ENCODE measurements at regions of chr2 and their contacts with region 1.

Region 1: DNA sequence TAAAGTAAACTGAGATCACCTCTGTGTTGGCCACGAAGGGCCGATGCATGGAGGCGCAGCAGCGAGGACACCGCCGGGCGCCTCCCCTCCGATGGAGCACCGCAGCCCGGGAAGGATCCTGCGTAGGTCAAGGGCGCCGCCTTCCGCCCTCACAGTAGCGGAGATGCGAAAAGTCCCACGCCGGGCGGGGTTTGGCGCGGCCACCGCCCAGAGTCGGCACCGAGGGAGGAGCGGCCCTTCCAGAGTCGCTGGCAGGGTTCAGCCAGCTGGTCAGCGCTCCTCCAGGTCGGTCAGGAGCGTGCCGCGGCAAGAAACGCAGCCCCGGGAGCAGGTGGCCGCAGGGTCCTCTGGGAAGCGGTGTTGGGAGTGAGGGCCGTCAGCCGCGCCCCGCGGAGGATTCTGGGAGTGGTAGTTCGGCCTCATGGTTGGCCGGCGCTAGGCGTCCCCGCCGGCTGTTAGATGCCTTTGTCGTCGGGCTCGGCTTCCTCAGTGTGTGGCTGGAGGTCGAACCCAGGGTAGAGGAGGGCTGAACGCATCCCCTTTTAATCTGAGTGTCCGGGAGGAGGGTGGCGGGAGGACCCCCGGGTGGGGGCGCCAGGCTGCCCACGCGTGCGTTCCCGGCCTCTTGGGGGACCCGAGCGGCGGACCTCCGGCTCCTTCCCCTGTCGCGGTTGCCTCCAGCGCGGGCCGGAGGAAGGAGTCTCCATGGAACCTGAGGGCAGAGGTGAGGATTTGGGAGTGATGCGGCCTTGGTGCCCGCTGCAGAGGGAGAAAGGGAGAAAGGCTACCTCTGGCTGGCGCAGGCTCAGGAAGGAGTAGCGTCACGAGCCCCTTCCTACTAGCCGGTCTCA is at the start of gene ZNF892:
- DNase-seq: peak; percentile 97
- H3K4me3 ChIP-seq: peak within 1 kb of the TSS; percentile 76 to 94 (median 80)
- H3K27ac ChIP-seq: peak within 1 kb of the TSS; percentile 85 to 95 (median 92)
- H3K4me1 ChIP-seq: peaks cover 19 to 26% (median 22%) of the 10 kb centered on the region in 4 donors
- H3K27me3 ChIP-seq: no peaks in the 10 kb centered on the region
- CTCF ChIP-seq: peak; percentile 47 to 58 (median 49)
- EP300 ChIP-seq: no peak
- POLR2A ChIP-seq: no peak
- total RNA-seq, gene ZNF892: 3.5 to 12.0 (median 7.6) TPM

Region 2: DNA sequence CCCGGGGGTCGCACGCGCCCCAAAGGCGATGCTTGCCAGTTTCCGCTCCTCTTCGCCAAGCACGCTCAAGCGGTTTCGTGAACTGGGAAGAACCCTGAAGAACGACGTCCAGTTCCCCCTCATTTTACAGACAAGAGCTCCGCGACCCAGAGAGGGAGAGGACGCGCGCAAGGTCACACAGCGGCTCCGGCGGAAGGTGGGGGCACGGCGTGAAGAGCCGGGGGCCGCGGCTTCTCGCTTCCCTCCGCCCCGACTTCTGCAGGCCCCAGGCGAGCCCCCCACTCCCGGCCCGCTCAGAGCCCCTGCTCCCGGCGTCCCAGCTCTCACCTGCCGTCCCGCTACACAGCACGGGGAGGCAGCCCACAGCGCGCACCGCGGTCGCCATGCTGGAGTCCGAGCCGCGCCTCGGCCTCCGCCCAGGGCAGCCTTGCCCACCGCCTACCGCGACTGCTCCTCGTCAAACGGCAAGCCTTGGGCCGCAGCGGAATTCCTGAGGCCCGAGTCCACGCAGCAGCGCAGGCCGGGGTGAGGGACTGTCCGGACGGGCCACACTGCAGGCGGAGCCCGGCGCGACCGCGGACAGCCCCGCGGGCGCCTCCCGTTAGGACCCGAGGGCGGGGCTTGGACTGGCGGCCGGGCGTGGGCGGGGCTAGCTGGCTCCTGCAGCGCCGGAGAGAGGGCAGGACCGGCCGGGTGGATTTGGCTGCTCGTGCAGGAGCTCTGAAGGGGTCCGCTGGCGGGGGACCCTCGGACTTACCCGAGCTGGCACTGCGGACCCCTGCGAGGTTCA is 85.7 kb before region 1 on chr2 and contains the start of gene MRPS5:
- intact Hi-C with region 1: loop called (anchors 5 kb)
- DNase-seq: peak; percentile 93
- H3K4me3 ChIP-seq: peak within 1 kb of the TSS; percentile 78 to 97 (median 93)
- H3K27ac ChIP-seq: peak within 1 kb of the TSS; percentile 89 to 96 (median 92)
- H3K4me1 ChIP-seq: peaks cover 19 to 41% (median 39%) of the 10 kb centered on the region in 4 donors
- H3K27me3 ChIP-seq: no peaks in the 10 kb centered on the region
- CTCF ChIP-seq: peak in 1 of 3 experiments; percentile 29
- EP300 ChIP-seq: no peak
- POLR2A ChIP-seq: peak; percentile 3
- total RNA-seq, gene MRPS5: 31.1 to 46.6 (median 39.8) TPM

Region 3: DNA sequence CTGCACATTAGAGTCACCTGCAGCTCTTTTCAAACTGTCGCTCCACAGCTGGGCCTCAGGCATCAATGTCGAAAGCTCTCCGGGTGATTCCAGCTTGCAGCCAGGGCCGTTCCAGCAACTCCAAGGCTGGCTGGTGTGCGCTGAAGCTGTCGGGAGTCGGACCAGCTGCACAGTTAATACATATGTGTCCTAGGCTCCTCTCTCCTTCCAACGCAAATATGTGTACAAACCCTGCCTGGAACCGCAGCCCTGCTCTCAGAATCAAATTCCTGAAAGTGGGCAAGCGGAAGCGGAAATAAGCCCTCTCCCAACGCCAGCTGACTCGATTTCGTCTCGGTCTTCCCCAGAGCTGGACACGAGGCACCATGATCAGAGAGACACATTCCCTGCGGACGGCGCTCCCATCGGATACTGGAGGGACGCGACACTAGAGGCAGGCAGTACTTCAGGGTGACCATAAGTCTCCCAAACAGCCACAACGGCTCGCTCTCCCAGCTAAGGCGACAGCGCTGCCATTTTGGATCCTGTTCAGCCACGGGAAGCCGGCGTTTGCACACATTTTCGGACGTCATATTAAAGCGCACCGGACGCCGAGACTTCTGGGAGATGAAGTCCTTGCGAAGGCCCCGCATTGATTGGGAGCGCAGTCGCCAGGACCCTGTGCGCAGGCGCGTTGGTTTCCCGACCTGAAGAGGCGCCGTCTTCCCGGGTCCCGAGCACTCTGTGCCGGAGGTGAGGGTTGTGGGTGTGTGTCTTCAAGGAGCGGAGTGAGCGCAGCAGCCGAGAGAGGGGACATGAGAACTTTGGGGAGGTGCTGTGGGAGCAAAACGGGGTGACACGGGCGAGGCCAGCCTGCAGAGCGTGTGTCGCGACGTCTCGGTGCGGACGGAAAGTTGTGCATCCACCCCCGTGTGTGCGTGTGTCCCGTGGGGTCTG is 41.9 kb before region 1 on chr2 and contains the start of gene ZNF2:
- intact Hi-C with region 1: loop called (anchors 5 kb)
- DNase-seq: peak; percentile 99
- H3K4me3 ChIP-seq: peak within 1 kb of the TSS; percentile 65 to 86 (median 71)
- H3K27ac ChIP-seq: peak within 1 kb of the TSS; percentile 92 to 94 (median 92)
- H3K4me1 ChIP-seq: peaks cover 21 to 29% (median 25%) of the 10 kb centered on the region in 4 donors
- H3K27me3 ChIP-seq: no peaks in the 10 kb centered on the region
- CTCF ChIP-seq: peak in 1 of 3 experiments; percentile 24
- EP300 ChIP-seq: no peak
- POLR2A ChIP-seq: no peak
- total RNA-seq, gene ZNF2: 3.5 to 6.9 (median 6.5) TPM

Region 4: DNA sequence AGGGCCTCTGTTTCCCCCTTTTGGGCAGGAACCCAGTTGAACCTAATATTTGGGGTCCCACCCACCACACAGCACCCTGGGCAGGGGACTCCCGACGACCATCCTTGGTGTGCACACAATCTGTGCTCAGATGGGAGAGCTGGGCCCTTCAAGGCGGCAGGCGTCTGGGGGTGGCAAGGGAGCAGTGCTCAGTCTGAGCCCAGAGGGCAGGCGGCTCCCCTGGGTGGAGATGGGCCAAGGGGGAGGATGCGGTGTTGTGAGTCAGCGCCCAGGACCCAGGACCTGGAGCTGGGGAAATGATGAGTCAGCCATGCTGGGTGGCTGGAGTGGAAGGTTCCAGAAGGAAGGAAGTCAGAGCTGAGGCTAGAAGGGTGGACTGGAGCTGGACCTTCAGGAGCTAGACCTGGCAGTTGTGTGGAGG is 70.7 kb after region 1 on chr2:
- intact Hi-C with region 1: no loop called
- DNase-seq: no peak
- H3K4me3 ChIP-seq: no peak overlapping the region
- H3K27ac ChIP-seq: no peak overlapping the region
- H3K4me1 ChIP-seq: no peaks in the 10 kb centered on the region
- H3K27me3 ChIP-seq: no peaks in the 10 kb centered on the region
- CTCF ChIP-seq: no peak
- EP300 ChIP-seq: no peak
- POLR2A ChIP-seq: no peak

Region 5: GRCh38 chr2:95345566-95346230 is 138.4 kb after region 1 on chr2:
- intact Hi-C with region 1: loop called (anchors 5 kb)
- DNase-seq: no peak
- H3K4me3 ChIP-seq: peak overlapping the region; percentile 76 to 85 (median 78)
- H3K27ac ChIP-seq: peak overlapping the region; percentile 83 to 90 (median 88)
- H3K4me1 ChIP-seq: peaks cover 5 to 45% (median 29%) of the 10 kb centered on the region in 4 donors
- H3K27me3 ChIP-seq: no peaks in the 10 kb centered on the region
- CTCF ChIP-seq: peak; percentile 81 to 95 (median 85)
- EP300 ChIP-seq: no peak
- POLR2A ChIP-seq: no peak